OCI-LY7 (cell line): ENCODE measurements at regions of chr2 and their contacts with region 1.

Region 1: DNA sequence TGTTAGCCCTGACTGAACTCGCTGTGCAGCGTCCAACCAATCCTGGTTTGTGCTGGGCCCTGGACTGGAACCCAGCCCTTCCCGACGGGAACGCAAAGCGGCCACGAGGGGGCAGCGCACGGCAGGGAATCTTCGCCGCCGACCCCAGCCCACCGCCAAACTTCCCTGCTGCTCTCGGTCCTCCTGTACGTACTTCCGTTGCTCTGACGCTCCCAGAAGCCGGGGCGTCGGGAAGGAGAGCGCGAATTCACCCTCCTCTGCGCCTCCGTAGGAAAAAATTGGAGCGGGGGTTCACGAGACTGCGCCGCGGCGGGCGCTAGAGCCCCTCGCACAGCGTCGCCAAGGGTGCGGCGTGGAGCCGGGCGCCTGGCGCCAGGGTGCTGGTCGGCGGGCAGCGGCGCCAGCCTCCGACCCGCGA is 948 bp upstream of the SH3RF3 start:
- DNase-seq: peak; percentile 11
- H3K4me3 ChIP-seq: no peak overlapping the region
- H3K27ac ChIP-seq: no peak overlapping the region
- H3K4me1 ChIP-seq: no peaks in the 10 kb centered on the region
- CTCF ChIP-seq: peak; percentile 73

Region 2: DNA sequence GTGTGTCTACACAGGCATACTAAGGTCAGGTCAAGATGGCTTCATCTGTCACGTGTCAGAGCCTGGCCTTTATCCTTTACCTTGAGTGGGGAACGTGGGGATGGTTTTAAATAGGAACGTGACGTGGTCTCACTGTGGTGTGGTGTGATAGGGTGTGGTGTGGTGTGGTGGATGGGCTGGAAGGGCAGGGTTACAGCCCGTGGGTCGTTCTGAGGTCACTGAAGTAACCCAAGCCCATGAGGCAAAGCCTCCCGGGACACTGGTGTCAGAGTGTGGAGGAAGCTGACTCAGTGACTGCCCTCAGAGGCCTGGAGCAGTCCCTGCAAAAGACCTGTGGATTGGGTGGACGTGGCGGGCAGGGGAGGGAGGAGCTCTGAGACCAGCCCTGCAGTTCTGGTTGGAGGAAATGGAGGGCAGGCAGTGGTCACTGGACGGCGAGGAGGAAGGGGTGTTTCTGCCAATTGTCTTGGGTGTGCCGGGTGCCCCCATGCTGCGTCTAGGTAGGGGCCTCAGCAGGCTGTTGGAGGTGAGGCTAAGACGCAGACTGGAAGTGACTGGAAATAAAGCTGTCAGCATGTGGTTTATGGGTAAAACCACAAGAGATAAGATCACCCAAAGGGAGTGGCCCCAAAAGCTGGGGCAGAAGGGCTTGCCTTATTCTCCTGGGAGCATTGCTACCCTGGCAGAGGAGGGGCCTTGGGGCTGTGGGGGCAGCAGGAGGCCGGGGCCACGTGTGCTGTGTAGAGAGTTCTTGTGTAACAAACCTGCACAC is 85.8 kb after region 1 on chr2:
- CTCF ChIA-PET with region 1: no interaction called
- POLR2A ChIA-PET with region 1: no interaction called
- intact Hi-C with region 1: loop called (anchors 10 kb)
- DNase-seq: no peak
- H3K4me3 ChIP-seq: no peak overlapping the region
- H3K27ac ChIP-seq: no peak overlapping the region
- H3K4me1 ChIP-seq: no peaks in the 10 kb centered on the region
- CTCF ChIP-seq: no peak

Region 3: GRCh38 chr2:109284826-109285225 is 156.8 kb after region 1 on chr2:
- CTCF ChIA-PET with region 1: no interaction called
- POLR2A ChIA-PET with region 1: no interaction called
- intact Hi-C with region 1: loop called (anchors 10 kb)
- DNase-seq: no peak
- H3K4me3 ChIP-seq: no peak overlapping the region
- H3K27ac ChIP-seq: no peak overlapping the region
- H3K4me1 ChIP-seq: no peaks in the 10 kb centered on the region
- CTCF ChIP-seq: no peak

Region 4: GRCh38 chr2:109510136-109511028 is 382.3 kb after region 1 on chr2:
- CTCF ChIA-PET with region 1: no interaction called
- POLR2A ChIA-PET with region 1: no interaction called
- intact Hi-C with region 1: loop called (anchors 1 kb)
- DNase-seq: peak; percentile 60
- H3K4me3 ChIP-seq: no peak overlapping the region
- H3K27ac ChIP-seq: no peak overlapping the region
- H3K4me1 ChIP-seq: no peaks in the 10 kb centered on the region
- CTCF ChIP-seq: peak; percentile 82